ENCODE measurements at regions of chr1 and their contacts with region 1.

Region 1: GRCh38 chr1:19484798-19485361 is 459 bp downstream of the CAPZB start:
- DNase-seq: peak in 1 of 2 donors; percentile 50
- ATAC-seq: peak; percentile 29

Region 2: DNA sequence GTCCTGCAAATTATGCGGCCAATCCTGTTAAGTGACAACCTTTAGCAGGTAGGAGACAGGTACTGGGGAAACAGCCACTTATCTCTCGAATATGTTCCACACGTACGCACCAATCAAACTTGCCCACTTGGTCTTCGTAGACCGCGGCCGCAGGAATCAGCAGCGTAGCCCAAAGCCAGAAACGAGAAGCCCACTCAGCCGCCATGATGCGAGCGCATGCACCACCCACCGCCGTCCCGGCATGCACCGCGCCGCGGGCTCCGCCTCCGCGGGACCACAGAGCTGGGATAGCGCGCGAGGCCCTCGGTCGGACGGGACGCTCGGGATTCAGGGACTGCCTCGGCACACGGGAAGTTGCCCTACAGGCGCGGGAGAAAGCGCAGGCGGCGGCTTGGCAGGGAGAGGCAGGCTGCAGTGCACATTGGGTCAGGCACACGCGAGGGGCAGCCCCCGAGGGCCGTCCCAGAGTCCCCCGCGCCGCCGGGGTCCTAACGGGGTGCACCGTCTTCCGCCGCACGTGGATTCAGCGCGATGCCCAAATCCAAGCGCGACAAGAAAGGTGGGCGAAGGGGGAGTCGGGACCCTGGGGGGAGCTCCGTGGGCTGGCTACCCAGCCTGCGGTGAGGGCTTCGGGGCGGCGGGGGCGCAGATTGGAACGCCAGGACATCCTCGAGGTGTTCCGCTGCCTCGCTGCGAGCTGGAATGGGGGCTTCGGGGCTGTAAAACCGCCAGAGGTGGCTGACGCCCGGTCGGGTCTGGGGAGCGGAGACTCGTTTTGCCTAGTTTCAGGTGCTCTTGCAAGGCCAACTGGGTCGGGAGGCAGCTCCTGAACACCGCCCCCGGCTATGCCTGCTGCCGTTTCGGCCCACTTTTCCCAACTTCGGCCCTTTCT is 233.3 kb before region 1 on chr1 and contains the starts of genes EMC1 and MRTO4:
- intact Hi-C with region 1: no loop called
- DNase-seq: peak; percentile 79 to 93
- ATAC-seq: peak; percentile 91
- total RNA-seq, gene EMC1: 33.2 to 41.1 TPM
- total RNA-seq, gene MRTO4: 16.3 to 18.5 TPM

Region 3: DNA sequence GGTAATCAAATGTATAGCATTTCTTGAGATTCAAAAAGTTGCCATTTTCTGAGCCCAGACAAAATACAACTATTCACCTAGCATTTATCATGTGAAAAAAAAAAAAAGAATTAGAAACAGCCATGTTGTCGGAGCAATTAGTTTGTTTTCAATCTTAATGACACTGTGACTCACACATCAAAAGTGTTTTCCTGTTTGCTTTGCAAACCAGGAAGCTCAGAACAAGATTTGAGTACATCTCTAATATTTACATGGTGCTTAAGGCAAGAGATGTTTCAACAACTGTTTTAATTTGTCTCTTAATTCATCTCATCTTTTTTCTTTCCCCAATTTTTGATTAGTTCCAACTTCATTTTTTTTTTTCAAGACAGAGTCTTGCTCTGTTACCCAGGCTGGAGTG is 62.9 kb after region 1 on chr1:
- intact Hi-C with region 1: no loop called
- DNase-seq: no peak
- ATAC-seq: peak; percentile 42

Region 4: GRCh38 chr1:19644681-19645410 is 160.0 kb after region 1 on chr1:
- intact Hi-C with region 1: loop called in 1 of 2 experiments (anchors 5 kb)
- DNase-seq: peak in 1 of 2 donors; percentile 71
- ATAC-seq: peak; percentile 29

Region 5: GRCh38 chr1:19762175-19762779 is 277.4 kb after region 1 on chr1:
- intact Hi-C with region 1: no loop called
- DNase-seq: peak in 1 of 2 donors; percentile 58
- ATAC-seq: peak; percentile 67